GM10248 (cell line): ENCODE measurements at regions of chr19 and their contacts with region 1.

Region 1: GRCh38 chr19:10580979-10581631 is 6.0 kb downstream of the AP1M2 start:
- DNase-seq: peak; percentile 82
- CTCF ChIP-seq: peak; percentile 99

Region 2: GRCh38 chr19:10543420-10544241 is 37.5 kb before region 1 on chr19 and contains the start of gene ATG4D:
- CTCF ChIA-PET with region 1: interaction called, 14 read pairs
- POLR2A ChIA-PET with region 1: no interaction called
- DNase-seq: peak; percentile 97
- CTCF ChIP-seq: no peak

Region 3: GRCh38 chr19:10593820-10594637 is 12.9 kb after region 1 on chr19:
- CTCF ChIA-PET with region 1: interaction called, 106 read pairs
- POLR2A ChIA-PET with region 1: no interaction called
- DNase-seq: no peak
- CTCF ChIP-seq: no peak

Region 4: GRCh38 chr19:10612491-10613119 is 31.5 kb after region 1 on chr19:
- CTCF ChIA-PET with region 1: interaction called, 16 read pairs
- POLR2A ChIA-PET with region 1: no interaction called
- DNase-seq: peak; percentile 13
- CTCF ChIP-seq: no peak

Region 5: GRCh38 chr19:10690341-10690781 is 109.3 kb after region 1 on chr19:
- CTCF ChIA-PET with region 1: interaction called, 161 read pairs
- POLR2A ChIA-PET with region 1: no interaction called
- DNase-seq: no peak
- CTCF ChIP-seq: no peak